ENCODE measurements at regions of chr11 and their contacts with region 1.

Region 1: DNA sequence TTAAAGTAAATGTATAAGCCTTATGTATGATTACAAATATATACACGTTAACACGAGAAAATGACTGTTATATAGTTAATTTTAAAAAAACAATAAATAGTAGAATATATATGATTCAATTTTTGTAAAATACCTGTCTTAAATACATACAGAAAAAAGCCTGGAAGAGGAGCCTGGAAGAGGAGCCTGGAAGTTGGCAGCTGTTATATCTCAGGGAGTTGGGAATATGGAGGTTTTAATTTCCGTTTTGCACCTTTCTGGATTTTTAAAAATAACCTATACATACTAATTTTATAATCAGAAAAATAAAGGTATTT is 111.6 kb downstream of the WT1 start:
- DNase-seq: no peak
- H3K4me3 Mint-ChIP-seq: no peak overlapping the region
- H3K27ac Mint-ChIP-seq: no peak overlapping the region
- H3K4me1 Mint-ChIP-seq: no peaks in the 10 kb centered on the region
- H3K27me3 Mint-ChIP-seq: peaks cover 8% of the 10 kb centered on the region

Region 2: GRCh38 chr11:32313477-32313876 is 10.3 kb before region 1 on chr11:
- CTCF ChIA-PET with region 1: interaction called, 12 read pairs
- DNase-seq: no peak
- H3K4me3 Mint-ChIP-seq: no peak overlapping the region
- H3K27ac Mint-ChIP-seq: no peak overlapping the region
- H3K4me1 Mint-ChIP-seq: peaks cover 7% of the 10 kb centered on the region
- H3K27me3 Mint-ChIP-seq: peaks cover 7% of the 10 kb centered on the region

Region 3: DNA sequence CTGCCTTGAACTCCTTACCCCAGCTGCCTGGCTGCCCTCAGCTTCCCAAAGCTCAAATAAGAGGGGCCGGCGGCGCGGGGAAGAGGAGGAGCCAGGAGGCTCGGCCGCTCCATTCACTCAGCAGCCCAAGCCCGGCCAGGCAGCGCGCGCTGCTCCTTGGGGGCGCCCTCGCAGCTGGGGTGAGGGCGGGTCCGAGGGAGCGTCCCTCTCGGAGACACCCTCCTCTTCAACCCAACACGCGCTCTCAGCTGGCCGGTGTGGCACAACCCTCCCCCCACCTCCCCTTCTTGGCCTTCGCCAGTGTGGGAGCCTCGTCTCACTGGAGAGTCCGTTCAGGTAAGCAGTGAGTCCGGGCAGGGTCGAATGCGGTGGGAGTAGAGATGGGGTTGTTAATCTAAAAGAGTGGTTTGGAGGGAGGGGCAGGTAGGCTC is 111.8 kb after region 1 on chr11 and contains the start of gene WT1:
- CTCF ChIA-PET with region 1: no interaction called
- DNase-seq: no peak
- H3K4me3 Mint-ChIP-seq: no peak within 1 kb of the TSS
- H3K27ac Mint-ChIP-seq: peak within 1 kb of the TSS; percentile 68
- H3K4me1 Mint-ChIP-seq: peaks cover 17% of the 10 kb centered on the region
- H3K27me3 Mint-ChIP-seq: peaks cover 100% of the 10 kb centered on the region